ENCODE measurements at regions of chr19 and their contacts with region 1.

Region 1: GRCh38 chr19:57559404-57560025 is at the start of gene ZNF550:
- DNase-seq: peak; percentile 92 to 93
- ATAC-seq: peak; percentile 98 to 100 (median 99)
- H3K4me3 ChIP-seq: peak within 1 kb of the TSS; percentile 80 to 100 (median 96)
- H3K27ac ChIP-seq: peak within 1 kb of the TSS; percentile 23 to 93 (median 84)
- H3K4me1 ChIP-seq: peaks cover 3 to 31% (median 21%) of the 10 kb centered on the region in 9 donors
- H3K27me3 ChIP-seq: no peaks in the 10 kb centered on the region
- CTCF ChIP-seq: no peak
- total RNA-seq, gene ZNF550: 4.6 to 9.7 (median 7.5) TPM

Region 2: DNA sequence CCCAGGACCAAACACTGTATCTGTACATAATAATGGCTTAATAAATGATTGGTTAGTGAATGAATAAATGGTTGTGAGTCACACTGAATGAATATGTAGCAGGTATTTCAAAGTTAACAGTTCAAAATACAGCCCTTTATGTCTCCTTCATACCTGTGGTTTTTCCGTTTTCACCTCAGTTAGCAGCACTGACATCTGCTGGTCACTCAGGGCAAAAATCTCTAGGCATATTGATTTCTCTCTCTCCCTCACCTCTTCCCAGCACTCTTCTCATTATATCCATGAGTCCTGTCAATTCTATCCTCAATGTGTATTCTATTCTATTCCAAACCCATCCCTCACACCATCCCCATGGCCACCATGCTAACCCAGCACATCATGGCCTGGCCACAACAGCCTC is 795.2 kb before region 1 on chr19:
- intact Hi-C with region 1: no loop called
- DNase-seq: no peak
- ATAC-seq: no peak
- H3K4me3 ChIP-seq: no peak overlapping the region
- H3K27ac ChIP-seq: no peak overlapping the region
- H3K4me1 ChIP-seq: peaks cover 0 to 12% (median 6%) of the 10 kb centered on the region in 9 donors
- H3K27me3 ChIP-seq: no peaks in the 10 kb centered on the region
- CTCF ChIP-seq: no peak

Region 3: GRCh38 chr19:57613941-57614743 is 54.6 kb after region 1 on chr19 and contains the start of gene ZNF134:
- intact Hi-C with region 1: loop called in 1 of 10 experiments (anchors 10 kb)
- DNase-seq: peak; percentile 93 to 94
- ATAC-seq: peak; percentile 96 to 100 (median 99)
- H3K4me3 ChIP-seq: peak within 1 kb of the TSS; percentile 66 to 100 (median 94)
- H3K27ac ChIP-seq: peak within 1 kb of the TSS in 9 of 10 donors; percentile 54 to 89 (median 85)
- H3K4me1 ChIP-seq: peaks cover 0 to 33% (median 14%) of the 10 kb centered on the region in 9 donors
- H3K27me3 ChIP-seq: no peaks in the 10 kb centered on the region
- CTCF ChIP-seq: peak in 7 of 9 donors; percentile 27 to 64 (median 53)
- total RNA-seq, gene ZNF134: 9.5 to 18.0 (median 12.7) TPM

Measured in heart right ventricle (tissue), 16 donors.